Colonic mucosa (tissue), 4 donors: ENCODE measurements at regions of chr16 and their contacts with region 1.

Region 1: GRCh38 chr16:10579965-10580882 is at the start of gene EMP2:
- DNase-seq: peak; percentile 88
- H3K4me3 ChIP-seq: peak within 1 kb of the TSS; percentile 86
- H3K27ac ChIP-seq: peak within 1 kb of the TSS; percentile 95
- H3K4me1 ChIP-seq: no peaks in the 10 kb centered on the region
- H3K27me3 ChIP-seq: no peaks in the 10 kb centered on the region
- CTCF ChIP-seq: peak; percentile 44
- total RNA-seq, gene EMP2: 113 to 133 TPM

Region 2: GRCh38 chr16:9556949-9557665 is 1023.1 kb before region 1 on chr16:
- intact Hi-C with region 1: no loop called
- DNase-seq: no peak
- H3K4me3 ChIP-seq: no peak overlapping the region
- H3K27ac ChIP-seq: no peak overlapping the region
- H3K4me1 ChIP-seq: no peaks in the 10 kb centered on the region
- H3K27me3 ChIP-seq: no peaks in the 10 kb centered on the region
- CTCF ChIP-seq: no peak

Region 3: DNA sequence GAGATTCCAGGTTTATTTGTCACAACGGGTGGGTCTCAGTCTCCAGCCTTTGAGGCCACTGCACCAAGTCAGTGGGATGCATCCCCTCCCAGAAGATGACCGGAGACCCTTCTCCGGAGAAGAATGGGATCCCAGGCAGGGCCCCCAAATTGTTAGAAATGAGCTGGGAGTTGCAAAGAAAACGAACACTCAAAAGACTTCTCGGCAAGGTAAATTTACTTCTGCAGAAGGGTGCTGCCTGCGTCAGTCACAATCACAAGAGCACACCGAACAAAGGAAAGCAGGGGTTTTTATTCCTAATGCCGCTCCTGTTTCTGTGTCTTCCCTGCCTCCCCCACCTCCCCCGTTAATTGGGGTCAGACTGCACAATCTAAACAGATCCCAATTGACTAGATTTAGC is 132.9 kb before region 1 on chr16:
- intact Hi-C with region 1: no loop called
- DNase-seq: no peak
- H3K4me3 ChIP-seq: no peak overlapping the region
- H3K27ac ChIP-seq: no peak overlapping the region
- H3K4me1 ChIP-seq: no peaks in the 10 kb centered on the region
- H3K27me3 ChIP-seq: no peaks in the 10 kb centered on the region
- CTCF ChIP-seq: no peak

Region 4: GRCh38 chr16:10521681-10522274 is 58.4 kb before region 1 on chr16:
- intact Hi-C with region 1: loop called (anchors 10 kb)
- DNase-seq: peak; percentile 77
- H3K4me3 ChIP-seq: no peak overlapping the region
- H3K27ac ChIP-seq: no peak overlapping the region
- H3K4me1 ChIP-seq: no peaks in the 10 kb centered on the region
- H3K27me3 ChIP-seq: no peaks in the 10 kb centered on the region
- CTCF ChIP-seq: peak; percentile 74

Region 5: DNA sequence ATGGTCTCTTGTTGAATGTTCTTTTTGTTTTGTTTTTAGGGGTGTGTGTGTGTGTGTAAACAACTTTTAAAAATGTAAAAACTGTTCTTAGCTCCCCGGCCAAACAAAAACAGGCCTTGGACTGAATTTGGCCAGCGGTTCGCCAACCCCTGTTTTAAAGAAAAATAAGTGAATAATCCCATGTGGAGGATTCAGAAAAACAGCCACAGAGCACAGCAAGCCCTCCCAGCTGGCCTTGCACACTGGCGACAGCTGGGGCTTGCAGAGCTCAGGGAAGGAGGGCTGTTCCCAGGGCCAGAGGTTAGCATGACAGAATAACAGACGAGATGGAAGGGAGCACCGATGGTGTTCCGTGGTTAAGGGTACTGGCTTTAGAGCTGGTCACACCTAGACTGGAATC is 38.9 kb before region 1 on chr16:
- intact Hi-C with region 1: no loop called
- DNase-seq: no peak
- H3K4me3 ChIP-seq: no peak overlapping the region
- H3K27ac ChIP-seq: no peak overlapping the region
- H3K4me1 ChIP-seq: no peaks in the 10 kb centered on the region
- H3K27me3 ChIP-seq: no peaks in the 10 kb centered on the region
- CTCF ChIP-seq: no peak

Region 6: DNA sequence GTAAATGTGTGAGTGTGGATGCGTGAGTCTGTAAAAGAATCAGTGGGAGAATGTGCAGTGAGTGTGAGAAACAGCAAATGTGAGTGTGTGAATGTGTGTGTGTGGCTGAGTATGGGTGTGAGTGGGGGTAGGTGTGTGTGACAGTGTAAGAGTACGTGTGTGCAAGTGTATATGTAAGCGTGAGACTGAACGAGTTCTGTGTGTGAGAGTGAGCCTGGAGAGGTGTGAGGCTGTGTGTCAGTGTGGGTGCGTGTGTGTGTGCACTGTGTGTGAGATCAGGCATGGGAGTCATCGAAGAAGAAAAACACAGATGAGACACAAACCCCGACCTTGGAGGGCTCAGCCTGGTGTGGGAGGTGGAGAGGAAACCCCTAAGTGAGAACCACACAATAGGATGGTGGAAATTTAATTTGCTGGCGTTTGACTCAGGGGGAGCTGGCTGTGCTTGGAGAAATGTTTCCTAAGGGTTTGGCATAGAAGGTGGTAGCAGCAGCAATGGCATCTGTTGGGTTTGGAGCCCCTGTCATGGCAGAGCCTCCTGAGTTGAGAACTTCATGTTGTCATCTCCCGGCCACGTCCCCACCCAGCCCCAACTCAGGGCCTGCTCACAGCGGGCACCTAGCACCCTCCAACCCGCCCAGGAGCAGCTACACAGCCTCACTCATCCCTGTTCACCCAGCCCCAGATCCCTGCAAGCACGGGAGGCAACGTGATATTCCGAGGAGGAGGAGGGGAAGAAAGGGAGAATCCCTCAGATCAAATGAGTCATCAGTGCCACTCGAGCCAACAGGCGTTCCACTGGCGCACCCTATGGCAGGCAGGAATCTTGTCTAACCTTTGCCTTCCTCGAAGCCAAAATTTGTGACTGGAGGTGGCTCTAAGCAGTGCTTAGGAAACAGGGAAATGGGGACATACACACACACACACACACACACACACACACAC is 149.2 kb after region 1 on chr16:
- intact Hi-C with region 1: loop called (anchors 5 kb)
- DNase-seq: no peak
- H3K4me3 ChIP-seq: no peak overlapping the region
- H3K27ac ChIP-seq: no peak overlapping the region
- H3K4me1 ChIP-seq: no peaks in the 10 kb centered on the region
- H3K27me3 ChIP-seq: no peaks in the 10 kb centered on the region
- CTCF ChIP-seq: no peak

Region 7: GRCh38 chr16:10964039-10964890 is 384.0 kb after region 1 on chr16:
- intact Hi-C with region 1: no loop called
- DNase-seq: peak; percentile 86
- H3K4me3 ChIP-seq: no peak overlapping the region
- H3K27ac ChIP-seq: no peak overlapping the region
- H3K4me1 ChIP-seq: no peaks in the 10 kb centered on the region
- H3K27me3 ChIP-seq: no peaks in the 10 kb centered on the region
- CTCF ChIP-seq: peak; percentile 96